ENCODE measurements at regions of chr19 and their contacts with region 1.

Region 1: DNA sequence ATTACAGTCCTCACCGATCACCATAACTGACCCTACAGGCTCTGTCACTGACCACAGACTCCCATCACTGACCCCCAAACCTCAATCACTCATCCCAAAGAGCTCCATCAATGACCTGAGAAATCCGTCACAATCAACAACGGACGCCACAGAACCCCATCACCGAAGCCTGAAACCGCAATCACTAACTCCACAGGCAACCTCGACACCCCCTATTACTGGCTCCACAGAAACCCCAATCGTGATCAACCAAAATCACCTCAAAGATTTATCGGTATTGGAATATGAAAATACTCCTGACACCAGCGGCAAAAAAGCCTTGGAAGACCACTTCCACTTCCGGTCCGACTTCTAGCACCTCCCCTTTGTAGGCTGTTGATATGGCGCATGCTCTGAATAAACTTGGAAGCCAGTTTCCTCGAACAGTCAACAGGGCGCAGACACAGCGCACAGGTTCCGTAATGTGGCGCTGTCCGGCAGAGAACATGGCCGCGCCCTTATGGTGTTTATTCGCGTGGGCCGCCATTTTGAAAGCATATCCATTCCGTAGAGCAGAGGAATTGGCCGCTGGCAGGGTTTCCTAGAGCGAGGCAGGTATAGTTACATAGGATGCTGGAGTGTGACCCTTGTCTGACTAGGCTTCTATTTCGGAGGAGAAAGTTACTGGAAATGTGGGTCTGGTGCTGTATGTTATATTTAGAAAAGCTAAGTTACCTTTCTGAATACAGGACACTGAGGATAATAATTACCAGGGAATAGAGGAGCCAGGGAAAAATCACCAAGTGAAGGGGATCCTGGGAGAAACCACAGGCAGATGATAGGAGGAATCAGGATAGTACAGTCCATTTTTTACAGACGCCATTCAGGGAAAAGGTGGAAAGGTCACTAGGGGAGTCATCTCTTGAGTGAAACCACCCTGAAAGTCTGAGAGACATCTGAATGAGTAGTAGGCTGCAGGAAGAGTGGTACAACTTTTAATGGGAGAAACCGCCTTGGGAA is at the start of gene ZNF585A:
- DNase-seq: peak; percentile 83 to 98 (median 89)
- ATAC-seq: peak; percentile 99
- H3K4me3 ChIP-seq: peak within 1 kb of the TSS; percentile 77
- H3K4me3 Mint-ChIP-seq: no peak within 1 kb of the TSS
- H3K27ac ChIP-seq: peak within 1 kb of the TSS; percentile 63 to 73
- H3K27ac Mint-ChIP-seq: no peak within 1 kb of the TSS
- H3K4me1 ChIP-seq: peaks cover 11% of the 10 kb centered on the region
- H3K4me1 Mint-ChIP-seq: no peaks in the 10 kb centered on the region
- H3K27me3 ChIP-seq: no peaks in the 10 kb centered on the region
- H3K27me3 Mint-ChIP-seq: no peaks in the 10 kb centered on the region
- CTCF ChIP-seq: no peak
- total RNA-seq, gene ZNF585A: 4.5 to 4.6 TPM

Region 2: DNA sequence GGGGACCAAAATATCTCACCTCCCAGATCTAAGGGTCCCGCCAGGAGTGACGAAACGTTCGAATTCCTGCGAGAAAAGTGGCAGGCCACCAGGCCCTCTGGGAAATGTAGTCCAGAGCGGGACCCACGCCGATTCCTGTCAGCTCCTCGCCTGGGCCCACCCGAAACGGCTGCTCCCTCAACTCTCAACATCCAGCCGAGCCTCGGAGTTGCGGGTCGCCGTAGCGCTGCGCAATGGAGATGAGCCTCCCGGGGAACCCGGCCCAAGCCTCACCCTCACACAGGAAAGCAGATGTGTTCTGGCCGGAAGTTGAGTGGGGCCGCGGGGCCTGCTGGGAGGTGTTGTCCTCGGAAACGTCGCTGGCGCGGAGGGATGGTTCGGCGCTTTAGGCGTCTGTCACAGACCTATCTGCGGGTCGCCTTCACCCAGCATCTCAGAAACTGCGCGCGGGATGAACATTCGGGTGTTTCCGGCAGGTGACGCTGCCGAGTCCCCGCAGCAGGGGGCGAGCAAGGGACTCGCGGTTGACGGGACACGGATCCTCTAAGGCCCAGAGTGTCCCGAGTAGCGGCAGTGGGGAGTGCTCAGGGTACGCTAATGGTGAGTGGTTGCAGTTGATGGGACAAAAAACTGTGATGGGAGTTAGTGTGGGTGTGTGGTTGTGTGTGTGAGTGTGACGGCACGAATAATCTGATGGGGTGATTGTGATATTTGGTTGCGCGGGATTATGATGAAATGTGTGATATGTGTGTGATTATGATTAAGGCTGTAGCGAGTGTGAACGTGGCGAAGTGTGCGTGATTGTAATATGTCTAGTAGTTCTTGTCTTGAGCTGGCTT is 256.5 kb before region 1 on chr19 and contains the starts of genes ZNF568 and ZNF829:
- CTCF ChIA-PET with region 1: no interaction called
- POLR2A ChIA-PET with region 1: no interaction called
- intact Hi-C with region 1: loop called in 1 of 2 experiments (anchors 5 kb)
- DNase-seq: peak; percentile 83 to 97 (median 90)
- ATAC-seq: peak; percentile 97
- H3K4me3 ChIP-seq: peak within 1 kb of the TSS; percentile 92
- H3K4me3 Mint-ChIP-seq: peak within 1 kb of the TSS; percentile 90
- H3K27ac ChIP-seq: peak within 1 kb of the TSS; percentile 89 to 97
- H3K27ac Mint-ChIP-seq: peak within 1 kb of the TSS; percentile 88
- H3K4me1 ChIP-seq: peaks cover 19% of the 10 kb centered on the region
- H3K4me1 Mint-ChIP-seq: peaks cover 44% of the 10 kb centered on the region
- H3K27me3 ChIP-seq: no peaks in the 10 kb centered on the region
- H3K27me3 Mint-ChIP-seq: no peaks in the 10 kb centered on the region
- CTCF ChIP-seq: peak; percentile 74
- total RNA-seq, gene ZNF568: 3.0 to 4.2 TPM
- total RNA-seq, gene ZNF829: 3.8 to 4.4 TPM

Region 3: GRCh38 chr19:37114020-37114419 is 58.6 kb before region 1 on chr19:
- CTCF ChIA-PET with region 1: no interaction called
- POLR2A ChIA-PET with region 1: no interaction called
- intact Hi-C with region 1: no loop called
- DNase-seq: no peak
- ATAC-seq: no peak
- H3K4me3 ChIP-seq: no peak overlapping the region
- H3K4me3 Mint-ChIP-seq: no peak overlapping the region
- H3K27ac ChIP-seq: no peak overlapping the region
- H3K27ac Mint-ChIP-seq: no peak overlapping the region
- H3K4me1 ChIP-seq: no peaks in the 10 kb centered on the region
- H3K4me1 Mint-ChIP-seq: no peaks in the 10 kb centered on the region
- H3K27me3 ChIP-seq: no peaks in the 10 kb centered on the region
- H3K27me3 Mint-ChIP-seq: no peaks in the 10 kb centered on the region
- CTCF ChIP-seq: peak; percentile 16

Region 4: GRCh38 chr19:37217855-37218591 is 45.4 kb after region 1 on chr19 and contains the start of gene ZNF383:
- CTCF ChIA-PET with region 1: interaction called, 3 read pairs
- POLR2A ChIA-PET with region 1: interaction called, 10 read pairs
- intact Hi-C with region 1: loop called in 1 of 2 experiments (anchors 2 kb)
- DNase-seq: peak; percentile 66 to 90 (median 78)
- ATAC-seq: peak; percentile 81
- H3K4me3 ChIP-seq: peak within 1 kb of the TSS; percentile 94
- H3K4me3 Mint-ChIP-seq: peak within 1 kb of the TSS; percentile 93
- H3K27ac ChIP-seq: peak within 1 kb of the TSS; percentile 81 to 90
- H3K27ac Mint-ChIP-seq: peak within 1 kb of the TSS; percentile 89
- H3K4me1 ChIP-seq: peaks cover 14% of the 10 kb centered on the region
- H3K4me1 Mint-ChIP-seq: peaks cover 42% of the 10 kb centered on the region
- H3K27me3 ChIP-seq: no peaks in the 10 kb centered on the region
- H3K27me3 Mint-ChIP-seq: no peaks in the 10 kb centered on the region
- CTCF ChIP-seq: no peak
- total RNA-seq, gene ZNF383: 13.1 to 15.7 TPM

Measured in CD4-positive, alpha-beta T cell (primary cell).